ENCODE measurements at regions of chr7 and their contacts with region 1.

Region 1: DNA sequence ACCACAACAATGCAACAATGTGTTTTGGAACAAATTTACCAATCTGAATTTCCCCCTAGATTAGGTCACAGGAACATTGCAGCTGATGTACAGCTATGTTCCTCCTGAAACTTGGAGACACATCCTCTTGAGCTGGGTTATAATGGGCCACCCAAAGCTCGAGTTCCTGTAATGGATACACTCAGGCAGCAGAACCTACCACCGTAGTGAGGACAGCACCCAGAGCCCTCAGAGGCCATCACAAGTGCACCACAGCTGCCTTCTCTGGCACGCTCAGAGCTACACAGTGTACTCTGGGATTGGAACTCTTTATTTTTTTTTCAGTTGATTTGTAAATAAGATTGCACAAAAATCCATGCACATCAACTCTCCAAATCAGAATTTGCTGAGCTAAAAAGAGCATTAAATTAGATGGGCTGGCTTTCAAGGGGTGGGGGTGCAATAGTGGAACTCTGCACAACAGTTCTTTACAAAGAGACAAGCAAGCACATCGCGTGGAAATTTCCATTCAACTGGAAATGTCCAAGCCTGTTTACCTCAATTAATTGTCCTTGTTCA is 56.7 kb downstream of the EGFR start:
- DNase-seq: no peak
- CTCF ChIP-seq: no peak

Region 2: DNA sequence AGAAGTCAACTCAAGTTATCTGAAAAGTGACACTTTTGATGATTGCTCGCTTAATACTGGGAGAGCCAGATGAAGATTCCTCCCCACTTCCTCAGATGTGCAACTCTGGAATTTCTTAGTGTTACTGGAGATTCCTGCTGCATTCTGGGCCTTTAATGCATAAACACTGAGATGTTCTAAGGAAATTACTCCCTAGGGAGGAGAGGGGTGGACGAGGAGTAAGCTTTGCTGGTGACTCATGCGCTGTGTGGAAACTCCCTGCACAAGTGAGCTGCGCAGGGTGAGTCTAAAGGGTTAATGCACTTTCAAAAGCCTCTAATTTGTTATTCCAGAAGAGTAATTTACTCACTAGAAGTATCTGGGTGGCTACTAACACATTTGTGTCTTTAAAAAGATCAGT is 10.5 kb before region 1 on chr7:
- CTCF ChIA-PET with region 1: interaction called, 10 read pairs
- POLR2A ChIA-PET with region 1: no interaction called
- DNase-seq: no peak
- CTCF ChIP-seq: no peak

Region 3: GRCh38 chr7:55096323-55097187 is 21.0 kb after region 1 on chr7:
- CTCF ChIA-PET with region 1: no interaction called
- POLR2A ChIA-PET with region 1: no interaction called
- DNase-seq: no peak
- CTCF ChIP-seq: no peak

Measured in GM10248 (cell line).